Colonic mucosa (tissue), 4 donors: ENCODE measurements at regions of chr6 and their contacts with region 1.

Region 1: GRCh38 chr6:3281631-3282475 is 23.1 kb downstream of the PSMG4 start:
- DNase-seq: no peak
- H3K4me3 ChIP-seq: no peak overlapping the region
- H3K27ac ChIP-seq: no peak overlapping the region
- H3K4me1 ChIP-seq: no peaks in the 10 kb centered on the region
- H3K27me3 ChIP-seq: no peaks in the 10 kb centered on the region
- CTCF ChIP-seq: no peak

Region 2: GRCh38 chr6:3456755-3457466 is 175.1 kb after region 1 on chr6 and contains the start of gene SLC22A23:
- intact Hi-C with region 1: loop called (anchors 5 kb)
- DNase-seq: peak; percentile 85
- H3K4me3 ChIP-seq: peak within 1 kb of the TSS; percentile 78
- H3K27ac ChIP-seq: peak within 1 kb of the TSS; percentile 57
- H3K4me1 ChIP-seq: peaks cover 6% of the 10 kb centered on the region
- H3K27me3 ChIP-seq: no peaks in the 10 kb centered on the region
- CTCF ChIP-seq: peak; percentile 58
- total RNA-seq, gene SLC22A23: 85.7 to 89.5 TPM

Region 3: GRCh38 chr6:3575687-3576086 is 293.8 kb after region 1 on chr6:
- intact Hi-C with region 1: no loop called
- DNase-seq: no peak
- H3K4me3 ChIP-seq: no peak overlapping the region
- H3K27ac ChIP-seq: no peak overlapping the region
- H3K4me1 ChIP-seq: no peaks in the 10 kb centered on the region
- H3K27me3 ChIP-seq: no peaks in the 10 kb centered on the region
- CTCF ChIP-seq: no peak

Region 4: DNA sequence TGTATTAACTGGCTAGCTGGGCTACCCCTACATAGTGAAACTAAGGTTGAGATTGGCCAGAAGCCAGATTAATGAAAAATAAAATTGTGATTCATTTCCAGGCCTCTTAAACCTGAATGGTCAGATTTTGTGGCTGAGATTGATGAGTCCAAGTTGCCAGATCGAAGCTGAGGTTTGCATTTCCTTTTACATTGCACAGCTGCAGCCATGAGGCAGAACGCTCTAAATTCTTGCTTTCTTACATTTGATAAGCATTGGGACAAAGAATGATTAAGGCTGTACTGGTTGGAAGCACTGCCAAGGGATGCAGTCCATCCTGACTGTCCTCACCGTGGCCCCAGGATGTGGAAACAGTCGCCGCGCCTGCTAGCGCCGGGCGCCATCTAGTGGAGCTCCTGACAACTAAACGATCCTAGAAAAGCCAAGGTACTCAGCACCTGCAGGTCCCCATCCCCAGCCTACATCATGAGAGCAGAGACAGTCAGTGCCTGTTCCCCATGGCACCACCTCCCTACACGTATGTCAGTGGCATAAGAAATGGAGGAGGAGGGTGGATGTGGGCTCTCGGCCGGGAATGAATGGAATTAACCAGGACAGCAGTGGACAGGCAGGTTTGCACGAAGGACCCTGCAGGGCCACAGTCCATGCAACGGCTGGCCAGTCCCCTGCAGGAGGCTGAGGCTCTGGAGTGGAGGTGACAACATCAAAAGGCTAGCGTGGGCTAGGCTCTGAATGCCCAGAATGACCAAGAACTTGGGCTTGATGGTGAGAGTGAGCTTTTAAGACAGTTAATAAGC is 450.7 kb after region 1 on chr6:
- intact Hi-C with region 1: loop called (anchors 2 kb)
- DNase-seq: peak; percentile 78
- H3K4me3 ChIP-seq: no peak overlapping the region
- H3K27ac ChIP-seq: no peak overlapping the region
- H3K4me1 ChIP-seq: no peaks in the 10 kb centered on the region
- H3K27me3 ChIP-seq: no peaks in the 10 kb centered on the region
- CTCF ChIP-seq: peak; percentile 72